ENCODE measurements at regions of chr22 and their contacts with region 1.

Region 1: DNA sequence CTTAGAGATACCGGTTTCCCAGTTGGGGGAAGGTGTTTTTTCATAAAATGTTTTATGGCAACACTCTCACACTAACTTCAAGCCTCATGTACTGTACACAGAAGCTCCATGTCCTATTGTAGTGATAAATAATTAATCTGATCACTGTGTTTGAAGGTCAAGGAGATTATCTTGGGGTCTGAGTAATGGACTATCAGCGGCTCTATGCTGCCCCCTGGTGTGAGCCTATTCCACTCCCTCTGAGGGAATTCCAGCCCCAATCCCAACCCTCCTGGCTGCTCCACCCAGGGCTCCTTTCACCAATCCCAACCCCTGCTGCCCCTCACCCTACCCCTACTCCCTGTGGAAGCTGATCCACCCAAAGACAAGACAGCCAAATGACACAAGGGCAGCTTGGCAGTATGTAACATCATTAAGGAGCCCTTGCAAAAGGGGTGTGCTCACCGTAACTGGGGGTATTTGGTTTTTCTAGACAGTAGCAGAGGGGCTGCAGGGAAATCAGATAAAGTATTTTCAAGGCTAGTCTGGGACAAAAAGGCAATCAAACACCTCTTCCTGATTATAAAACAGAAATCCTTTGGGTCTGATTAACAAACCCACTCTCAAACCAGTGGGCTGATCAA is 22.3 kb downstream of the HPS4 start:
- DNase-seq: peak; percentile 31 to 83
- ATAC-seq: peak; percentile 83

Region 2: DNA sequence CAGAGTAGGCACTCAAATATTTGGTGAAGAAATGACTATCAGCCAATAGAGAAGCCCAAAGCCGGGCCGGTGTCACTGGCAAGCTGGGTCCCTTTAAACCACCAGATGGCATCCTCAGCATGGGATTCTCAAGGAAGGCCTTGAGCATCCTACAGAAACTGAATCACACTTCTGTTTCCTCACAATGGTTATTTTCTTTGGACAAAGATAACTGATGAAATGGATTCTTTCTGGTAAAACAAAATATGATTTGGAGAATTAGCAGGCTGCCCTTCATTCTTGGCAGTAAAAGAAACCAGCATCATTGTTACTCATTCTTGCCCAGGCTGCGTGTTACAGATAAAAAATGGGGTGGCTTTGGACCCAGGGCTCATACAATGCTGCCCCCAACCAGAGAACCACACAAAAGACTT is 62.6 kb before region 1 on chr22:
- intact Hi-C with region 1: loop called in 1 of 2 experiments (anchors 2 kb)
- DNase-seq: peak; percentile 49 to 57
- ATAC-seq: peak; percentile 91